AG04449 (cell line): ENCODE measurements at regions of chr20 and their contacts with region 1.

Region 1: DNA sequence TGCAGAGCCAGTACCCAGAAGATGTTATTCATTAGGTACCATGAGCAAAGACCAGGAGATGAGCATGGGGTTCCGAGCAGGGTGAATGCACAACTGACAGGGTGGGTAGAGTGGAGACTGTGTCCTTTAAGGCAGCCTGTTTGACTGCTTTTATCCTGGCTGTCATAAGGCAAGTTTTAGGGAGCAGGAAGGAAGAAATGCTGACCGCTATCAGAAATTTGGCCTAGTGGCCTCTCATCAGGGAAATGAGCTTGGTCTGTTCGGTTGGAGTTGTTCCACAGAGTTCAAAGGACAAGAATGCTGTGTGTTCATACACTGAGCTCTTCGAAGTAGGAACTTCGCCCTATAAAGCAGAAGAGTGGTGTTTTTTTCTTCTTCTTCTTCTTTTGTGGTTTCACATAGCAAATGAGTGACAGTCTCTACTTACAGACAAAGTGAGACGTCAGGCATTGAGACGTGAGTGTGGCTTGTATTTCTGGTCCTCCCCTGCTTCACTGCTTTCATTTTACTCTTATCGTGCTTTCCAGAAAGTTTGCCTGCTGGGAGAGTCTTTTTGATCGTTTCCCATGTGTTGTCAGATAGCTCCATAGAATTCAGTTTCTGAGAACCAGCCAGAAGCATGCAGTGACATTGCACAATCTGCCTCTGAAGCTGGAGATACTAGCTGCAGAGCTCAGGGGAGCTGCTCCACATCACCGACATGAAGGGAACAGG is at the start of gene CASS4:
- DNase-seq: peak; percentile 70
- H3K4me3 ChIP-seq: peak within 1 kb of the TSS; percentile 58
- CTCF ChIP-seq: no peak

Region 2: DNA sequence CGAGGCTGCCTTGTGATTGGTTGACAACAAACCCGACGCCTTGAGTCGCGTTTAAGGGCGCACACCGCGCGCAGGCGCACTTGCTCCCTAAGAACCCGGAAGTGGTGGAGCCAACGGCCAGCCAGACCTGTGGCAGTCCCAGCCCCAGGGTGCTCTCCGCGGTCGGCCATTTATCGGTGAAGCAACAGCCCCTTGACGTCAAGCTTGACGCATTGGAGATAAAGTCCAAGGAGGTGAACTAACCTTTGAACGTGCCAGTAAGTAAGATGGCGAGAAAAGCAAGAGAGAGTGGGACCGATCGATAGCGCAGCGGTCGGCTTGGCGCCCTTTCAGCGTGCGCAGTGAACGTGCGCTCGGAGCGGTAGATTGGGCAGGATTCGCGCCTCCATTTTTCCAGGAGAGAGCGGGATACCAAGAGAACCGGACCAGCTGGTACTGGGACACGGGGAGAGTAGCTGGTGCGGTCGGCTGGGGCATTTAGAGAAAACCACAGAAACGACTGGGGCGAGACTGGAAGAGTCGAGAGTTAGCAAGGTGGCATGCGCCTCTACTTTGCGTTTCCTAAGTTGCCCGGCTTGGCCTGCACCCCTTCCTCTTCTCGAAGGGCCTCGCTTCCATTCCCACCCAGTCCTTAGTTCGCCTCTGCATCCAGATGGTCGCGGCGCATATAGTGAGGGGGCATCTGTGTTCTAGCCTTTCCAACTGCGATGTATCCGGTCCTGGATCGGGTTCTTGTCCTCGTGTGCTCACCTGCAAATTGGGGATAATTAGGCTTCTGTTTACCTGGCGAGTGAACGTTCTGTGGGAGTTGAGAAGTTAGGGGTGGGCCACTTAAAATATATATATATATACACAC is 19.4 kb before region 1 on chr20 and contains the start of gene CSTF1:
- CTCF ChIA-PET with region 1: interaction called, 52 read pairs
- POLR2A ChIA-PET with region 1: interaction called, 6 read pairs
- DNase-seq: peak; percentile 99
- H3K4me3 ChIP-seq: peak within 1 kb of the TSS; percentile 92
- CTCF ChIP-seq: no peak

Region 3: DNA sequence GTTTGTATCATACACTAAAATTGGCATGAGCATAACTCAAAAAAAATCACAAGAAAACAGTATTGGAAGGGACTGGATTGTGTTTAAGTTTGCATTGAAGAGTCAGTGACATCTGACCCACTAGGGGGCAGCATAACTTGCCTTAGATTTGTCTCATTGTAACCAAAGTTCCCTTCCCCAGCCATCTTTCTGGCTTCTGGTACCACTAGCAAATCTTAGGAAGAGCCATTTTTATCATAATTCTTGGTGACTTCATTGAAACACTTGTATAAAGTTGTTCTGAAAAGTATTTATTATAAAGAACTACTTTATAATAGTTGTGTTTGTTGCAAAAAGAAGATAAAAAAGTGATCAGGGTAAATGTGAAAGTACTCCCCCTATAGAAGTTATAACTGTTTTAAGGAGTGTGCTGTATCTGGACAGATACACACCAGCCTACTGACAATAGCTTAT is 11.8 kb before region 1 on chr20:
- CTCF ChIA-PET with region 1: interaction called, 52 read pairs
- POLR2A ChIA-PET with region 1: interaction called, 3 read pairs
- DNase-seq: no peak
- H3K4me3 ChIP-seq: no peak overlapping the region
- CTCF ChIP-seq: peak; percentile 72

Region 4: GRCh38 chr20:56439771-56440291 is 27.9 kb after region 1 on chr20:
- CTCF ChIA-PET with region 1: interaction called, 3 read pairs
- POLR2A ChIA-PET with region 1: interaction called, 15 read pairs
- DNase-seq: peak; percentile 98
- H3K4me3 ChIP-seq: no peak overlapping the region
- CTCF ChIP-seq: no peak